ENCODE measurements at regions of chr19 and their contacts with region 1.

Region 1: DNA sequence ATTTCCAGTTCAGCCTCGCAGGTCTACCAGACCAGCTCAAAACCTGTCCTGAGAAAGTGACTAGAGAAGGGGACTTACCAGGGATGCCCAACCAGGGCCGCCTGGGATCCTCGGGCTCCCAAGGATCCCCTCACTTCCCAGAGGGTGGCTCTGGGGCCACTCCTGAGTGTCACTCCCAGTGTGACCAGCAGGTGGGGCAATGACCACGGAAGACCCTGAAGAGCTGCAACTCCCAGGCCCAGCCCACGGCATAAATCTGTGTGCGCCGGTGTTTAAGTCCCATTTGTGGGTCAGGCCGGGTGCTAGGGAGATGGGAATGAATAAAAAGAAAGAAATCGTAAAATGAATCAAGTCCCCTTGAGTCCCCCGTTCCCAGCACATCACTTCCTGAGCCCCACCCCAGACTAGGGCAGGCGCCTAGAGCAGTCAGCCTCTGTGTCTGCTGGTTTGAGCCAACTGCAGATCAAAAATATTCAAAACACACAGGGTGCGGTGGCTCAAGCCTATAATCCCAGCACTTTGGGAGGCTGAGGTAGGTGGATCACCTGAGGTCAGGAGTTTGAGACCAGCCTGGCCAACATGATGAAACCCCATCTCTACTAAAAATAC is 10.7 kb downstream of the PTGIR start:
- DNase-seq: peak; percentile 89
- ATAC-seq: peak; percentile 53
- H3K4me3 ChIP-seq: no peak overlapping the region
- H3K4me3 Mint-ChIP-seq: peak overlapping the region; percentile 26
- H3K27ac ChIP-seq: no peak overlapping the region
- H3K27ac Mint-ChIP-seq: peak overlapping the region; percentile 77
- H3K4me1 ChIP-seq: peaks cover 49 to 71% of the 10 kb centered on the region in 2 donors
- H3K4me1 Mint-ChIP-seq: peaks cover 58% of the 10 kb centered on the region
- H3K27me3 ChIP-seq: no peaks in the 10 kb centered on the region
- H3K27me3 Mint-ChIP-seq: no peaks in the 10 kb centered on the region
- CTCF ChIP-seq: peak; percentile 86

Region 2: DNA sequence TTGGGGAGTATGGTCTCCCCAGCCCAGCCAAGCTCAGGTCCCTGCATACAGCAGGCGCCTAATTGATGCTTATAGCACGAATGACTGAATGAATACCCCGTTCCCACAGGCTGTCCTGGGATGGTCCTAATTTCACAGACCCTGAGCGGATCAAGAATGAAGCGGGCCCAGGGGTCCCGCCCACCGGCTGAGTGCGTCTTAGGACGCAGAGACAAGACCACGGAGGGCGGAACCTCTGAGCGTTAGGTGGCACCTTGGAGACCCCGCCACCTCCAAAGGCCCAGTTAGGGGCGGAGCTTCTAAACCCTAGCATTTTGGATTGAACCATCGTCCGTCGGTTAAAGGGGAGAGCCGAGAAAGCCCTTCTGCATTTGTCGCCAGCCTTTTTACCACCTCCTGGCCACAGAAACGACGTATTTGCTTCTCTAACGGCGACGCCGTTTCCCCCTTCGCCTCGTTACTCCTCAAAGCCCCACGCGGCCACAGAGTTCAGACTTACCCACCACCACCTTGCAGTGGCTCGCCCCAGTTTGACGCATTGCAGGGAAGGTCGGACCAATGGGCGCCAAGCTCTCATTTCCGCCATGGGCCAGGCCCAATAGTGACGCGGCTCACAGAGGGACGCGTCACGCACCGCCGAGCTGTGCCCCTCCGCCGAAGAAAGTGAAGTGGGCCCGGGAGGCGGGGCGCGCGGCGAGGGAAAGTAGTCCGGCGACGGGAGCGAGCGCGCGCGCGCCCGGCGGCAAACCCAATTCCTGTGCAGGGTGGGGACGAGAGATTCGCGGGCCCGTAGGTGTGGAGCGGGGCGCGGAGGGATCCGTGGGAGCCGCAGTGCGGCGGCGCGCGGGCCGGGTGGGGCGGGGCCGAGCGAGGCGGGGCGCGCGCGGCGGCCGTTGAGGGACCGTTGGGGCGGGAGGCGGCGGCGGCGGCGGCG is 13.6 kb before region 1 on chr19:
- CTCF ChIA-PET with region 1: interaction called, 92 read pairs
- POLR2A ChIA-PET with region 1: interaction called, 19 read pairs
- intact Hi-C with region 1: loop called (anchors 2 kb)
- DNase-seq: peak; percentile 100
- ATAC-seq: peak; percentile 89
- H3K4me3 ChIP-seq: peak overlapping the region; percentile 64 to 100 (median 99)
- H3K4me3 Mint-ChIP-seq: peak overlapping the region; percentile 100
- H3K27ac ChIP-seq: peak overlapping the region; percentile 98 to 100
- H3K27ac Mint-ChIP-seq: peak overlapping the region; percentile 100
- H3K4me1 ChIP-seq: peaks cover 19 to 30% of the 10 kb centered on the region in 2 donors
- H3K4me1 Mint-ChIP-seq: peaks cover 31% of the 10 kb centered on the region
- H3K27me3 ChIP-seq: no peaks in the 10 kb centered on the region
- H3K27me3 Mint-ChIP-seq: no peaks in the 10 kb centered on the region
- CTCF ChIP-seq: no peak

Region 3: DNA sequence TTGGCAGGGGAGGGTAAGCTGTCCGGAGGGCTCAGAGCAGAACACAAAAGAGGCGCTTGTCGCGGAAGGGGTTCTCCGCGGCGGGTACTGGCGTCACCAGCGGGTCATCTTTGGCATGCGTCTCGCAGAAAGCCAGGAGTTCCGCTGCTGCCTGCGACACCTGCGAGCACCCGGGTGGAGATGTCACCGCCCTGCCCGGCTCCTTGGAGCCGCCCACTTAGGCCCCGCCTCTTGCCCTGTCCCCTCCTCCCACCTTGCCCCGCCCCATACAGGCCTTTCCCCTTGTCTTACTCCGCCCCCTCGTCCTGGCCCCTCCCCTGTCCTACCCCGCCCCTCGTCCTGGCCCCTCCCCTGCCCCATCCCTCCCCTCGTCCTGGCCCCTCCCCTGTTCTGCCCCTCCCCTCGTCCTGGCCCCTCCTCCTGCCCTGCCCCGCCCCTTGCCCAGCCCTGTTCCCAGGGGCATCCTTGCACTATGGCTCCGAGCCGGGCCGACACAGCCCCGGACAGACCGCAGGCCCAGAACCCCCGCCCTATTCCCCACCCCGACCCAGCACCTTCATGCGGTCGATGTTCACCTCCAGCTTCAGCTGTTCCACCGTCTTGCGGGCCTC is 19.9 kb after region 1 on chr19:
- CTCF ChIA-PET with region 1: interaction called, 21 read pairs
- POLR2A ChIA-PET with region 1: interaction called, 15 read pairs
- intact Hi-C with region 1: loop called (anchors 1 kb)
- DNase-seq: peak; percentile 98
- ATAC-seq: peak; percentile 74
- H3K4me3 ChIP-seq: peak overlapping the region in 4 of 5 experiments; percentile 35 to 57 (median 52)
- H3K4me3 Mint-ChIP-seq: peak overlapping the region; percentile 82
- H3K27ac ChIP-seq: peak overlapping the region; percentile 73 to 79
- H3K27ac Mint-ChIP-seq: peak overlapping the region; percentile 71
- H3K4me1 ChIP-seq: peaks cover 40 to 52% of the 10 kb centered on the region in 2 donors
- H3K4me1 Mint-ChIP-seq: peaks cover 30% of the 10 kb centered on the region
- H3K27me3 ChIP-seq: peaks cover 0 to 10% (median 2%) of the 10 kb centered on the region in 4 experiments
- H3K27me3 Mint-ChIP-seq: peaks cover 7% of the 10 kb centered on the region
- CTCF ChIP-seq: no peak

Region 4: DNA sequence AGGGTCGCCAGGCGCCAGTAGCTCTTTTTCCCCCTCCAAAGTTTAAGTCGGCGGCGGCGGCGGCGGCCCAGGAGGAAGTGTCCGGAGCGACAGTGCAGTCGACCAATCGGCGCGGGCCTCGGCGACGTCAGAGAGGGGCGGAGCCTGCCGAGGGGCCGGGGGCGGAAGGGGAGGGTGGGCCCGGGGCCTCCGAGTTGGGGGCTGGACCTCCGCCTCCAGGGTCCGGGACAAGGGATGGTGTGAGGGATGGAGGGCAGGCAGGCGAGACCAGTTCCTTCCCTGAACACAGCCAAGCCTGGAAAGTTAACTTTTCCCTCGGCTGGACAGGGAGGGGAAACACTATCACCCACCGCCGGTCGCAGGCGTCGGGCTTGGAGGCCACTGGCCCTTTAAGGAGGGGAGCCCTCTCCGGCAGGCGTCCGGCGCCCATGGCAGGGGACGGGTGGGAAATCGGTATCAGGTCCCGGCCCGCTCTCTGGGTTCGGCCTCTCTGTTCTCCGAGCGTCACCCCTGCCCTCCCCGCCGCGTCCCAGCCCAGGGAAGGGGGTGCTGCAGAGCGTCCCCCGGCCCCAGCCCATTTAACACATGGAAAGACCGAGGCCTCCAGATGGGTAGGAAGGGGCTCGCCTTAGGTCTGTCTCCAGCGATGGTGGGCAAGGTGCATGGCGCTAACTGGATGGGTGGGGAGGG is 103.0 kb after region 1 on chr19 and contains the start of gene PRKD2:
- CTCF ChIA-PET with region 1: interaction called, 5 read pairs
- POLR2A ChIA-PET with region 1: interaction called, 4 read pairs
- intact Hi-C with region 1: loop called (anchors 5 kb)
- DNase-seq: peak; percentile 89
- ATAC-seq: peak; percentile 48
- H3K4me3 ChIP-seq: peak within 1 kb of the TSS; percentile 77 to 99 (median 92)
- H3K4me3 Mint-ChIP-seq: peak within 1 kb of the TSS; percentile 97
- H3K27ac ChIP-seq: peak within 1 kb of the TSS; percentile 89 to 92
- H3K27ac Mint-ChIP-seq: peak within 1 kb of the TSS; percentile 95
- H3K4me1 ChIP-seq: peaks cover 58 to 75% of the 10 kb centered on the region in 2 donors
- H3K4me1 Mint-ChIP-seq: peaks cover 66% of the 10 kb centered on the region
- H3K27me3 ChIP-seq: no peaks in the 10 kb centered on the region
- H3K27me3 Mint-ChIP-seq: no peaks in the 10 kb centered on the region
- CTCF ChIP-seq: no peak
- total RNA-seq, gene PRKD2: 185 and 192 TPM in 2 replicates

Measured in B cell (primary cell).